T-cell (primary cell): ENCODE measurements at regions of chr15 and their contacts with region 1.

Region 1: DNA sequence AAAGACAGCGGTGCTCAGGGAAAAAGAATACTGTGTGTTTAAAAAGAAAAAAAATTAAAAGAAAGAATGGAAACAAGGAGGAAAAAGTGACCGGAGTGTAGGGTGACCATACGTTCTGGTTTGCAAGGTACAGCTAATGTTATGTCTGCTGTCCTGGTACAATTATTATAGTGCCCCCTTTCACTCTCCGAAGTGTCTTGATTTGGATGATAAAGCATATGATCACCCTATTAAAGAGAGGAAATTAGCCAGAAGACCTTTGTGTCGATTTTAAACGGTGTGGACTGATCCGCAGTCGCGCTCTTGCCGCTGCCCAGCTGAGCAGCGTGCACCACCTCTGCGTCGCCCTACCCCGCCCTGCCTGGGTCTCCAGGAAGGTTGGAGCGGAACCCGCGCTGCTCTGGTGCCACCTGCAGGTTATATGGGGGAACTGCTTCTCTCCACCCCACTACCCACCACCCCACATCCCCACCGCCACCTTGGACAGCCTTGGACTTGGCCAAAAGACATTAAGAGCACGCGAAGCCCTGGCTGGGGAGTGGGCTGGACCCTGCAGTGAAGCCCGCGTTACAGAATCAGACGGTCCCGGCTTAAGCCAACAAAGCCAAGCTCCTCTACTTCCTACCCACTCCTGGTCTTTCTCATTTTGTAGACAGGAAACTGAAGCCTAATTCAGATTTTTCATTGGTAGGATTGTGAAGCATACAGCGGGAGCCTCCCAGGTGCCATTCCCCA is 41.2 kb upstream of the UBE2Q2 start:
- DNase-seq: peak; percentile 50 to 86 (median 72)
- ATAC-seq: peak; percentile 97 to 100 (median 99)
- H3K4me3 ChIP-seq: no peak overlapping the region
- H3K4me3 Mint-ChIP-seq: peak overlapping the region in 2 of 3 donors; percentile 5 to 47
- H3K27ac ChIP-seq: no peak overlapping the region
- H3K27ac Mint-ChIP-seq: no peak overlapping the region
- H3K4me1 ChIP-seq: peaks cover 2 to 9% of the 10 kb centered on the region in 2 experiments
- H3K4me1 Mint-ChIP-seq: peaks cover 0 to 8% (median 5%) of the 10 kb centered on the region in 3 donors
- H3K27me3 ChIP-seq: peaks cover 0 to 18% of the 10 kb centered on the region in 2 experiments
- H3K27me3 Mint-ChIP-seq: peaks cover 33 to 43% of the 10 kb centered on the region in 2 donors

Region 2: DNA sequence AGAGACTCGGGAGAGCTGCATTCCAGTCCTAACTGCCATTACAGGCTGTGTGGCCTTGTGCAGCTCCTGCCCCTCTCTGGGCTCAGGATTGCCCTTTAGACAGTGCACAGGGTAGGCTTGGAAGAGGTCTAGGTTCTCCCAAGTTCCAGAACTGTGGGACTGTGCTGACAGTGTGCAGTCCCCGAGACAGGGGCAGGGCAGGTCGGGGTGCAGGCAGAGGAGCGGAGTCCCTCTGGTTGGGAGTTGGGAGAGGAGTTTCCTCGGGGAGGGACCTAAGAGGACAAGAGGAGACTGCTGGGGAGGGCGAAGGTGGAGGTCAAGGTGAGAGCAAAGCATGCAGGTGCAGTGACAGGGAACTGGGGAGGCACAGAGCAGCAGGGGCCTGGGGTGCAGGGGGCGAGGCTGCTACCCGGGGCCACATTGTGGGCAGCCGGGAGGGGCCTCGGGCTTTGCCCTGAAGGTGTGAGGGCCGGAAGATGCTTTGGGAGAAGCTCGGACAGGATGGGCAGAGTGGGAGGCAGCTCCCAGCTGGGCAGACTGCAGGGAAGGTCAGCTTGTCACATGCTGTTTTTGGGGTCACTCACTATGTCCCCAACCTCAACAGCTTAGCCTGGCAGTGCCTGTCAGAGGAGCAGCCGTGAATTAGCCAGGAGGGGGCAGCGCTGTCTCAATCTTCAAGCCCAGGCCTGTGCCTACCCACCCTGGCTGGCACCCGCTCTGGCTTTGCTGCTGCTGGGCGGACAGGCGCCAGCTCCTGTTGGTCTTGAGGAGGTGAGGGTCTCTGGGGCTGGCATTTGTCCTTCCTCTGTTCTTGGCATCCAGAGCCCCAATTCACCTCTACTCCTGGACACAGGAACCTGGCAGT is 73.9 kb before region 1 on chr15:
- CTCF ChIA-PET with region 1: interaction called, 6 to 19 read pairs
- POLR2A ChIA-PET with region 1: no interaction called
- DNase-seq: peak; percentile 38 to 83 (median 68)
- ATAC-seq: peak; percentile 70 to 85 (median 78)
- H3K4me3 ChIP-seq: no peak overlapping the region
- H3K4me3 Mint-ChIP-seq: no peak overlapping the region
- H3K27ac ChIP-seq: no peak overlapping the region
- H3K27ac Mint-ChIP-seq: no peak overlapping the region
- H3K4me1 ChIP-seq: peaks cover 0 to 14% of the 10 kb centered on the region in 2 experiments
- H3K4me1 Mint-ChIP-seq: peaks cover 12 to 17% (median 12%) of the 10 kb centered on the region in 3 donors
- H3K27me3 ChIP-seq: peaks cover 0 to 29% of the 10 kb centered on the region in 2 experiments
- H3K27me3 Mint-ChIP-seq: peaks cover 3 to 16% of the 10 kb centered on the region in 2 donors